MCF 10A (cell line): ENCODE measurements at regions of chr5 and their contacts with region 1.

Region 1: DNA sequence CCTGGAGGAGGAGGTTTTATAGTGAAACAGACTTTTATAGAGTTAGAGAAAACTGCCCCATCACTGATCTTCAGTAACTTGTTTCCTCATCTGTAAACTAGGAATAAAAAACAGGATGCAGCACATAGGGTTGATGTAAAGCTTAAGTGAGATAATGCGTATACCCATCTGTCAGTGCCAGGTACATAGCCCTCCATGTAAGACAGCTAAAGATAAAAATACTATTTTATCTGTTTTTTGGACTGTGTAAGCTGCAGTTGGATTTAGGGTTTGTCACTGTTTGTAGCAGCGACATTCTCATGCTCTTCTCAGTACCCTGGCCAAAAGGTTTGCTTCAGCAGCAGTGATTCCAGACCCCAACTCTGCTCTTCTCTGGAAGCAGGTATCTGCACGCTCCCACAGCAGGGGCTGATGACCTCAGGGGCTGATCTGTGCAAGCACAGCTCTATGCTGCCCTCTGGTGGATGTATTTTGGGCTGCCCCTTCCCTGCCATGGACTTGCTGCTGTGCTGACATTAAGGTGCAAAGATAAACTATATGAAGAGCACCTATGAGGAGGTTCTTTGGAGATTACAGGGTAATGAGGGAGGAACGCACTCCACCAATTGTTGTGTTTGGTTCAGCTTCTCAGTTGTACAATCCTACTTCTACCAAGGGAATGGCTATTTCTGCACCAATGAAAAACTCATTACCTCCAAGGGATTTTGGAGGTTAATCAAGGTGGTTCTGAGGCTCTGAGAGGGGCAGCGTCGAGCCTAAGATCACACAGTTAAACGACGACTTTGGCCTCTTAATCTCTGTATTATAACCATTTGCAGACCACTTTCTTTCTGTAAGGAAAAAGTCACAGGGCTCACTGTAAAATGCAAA is 13.1 kb downstream of the HMHB1 start:
- DNase-seq: peak; percentile 84
- H3K4me3 Mint-ChIP-seq: no peak overlapping the region
- H3K27ac Mint-ChIP-seq: no peak overlapping the region
- H3K4me1 Mint-ChIP-seq: peaks cover 6% of the 10 kb centered on the region
- H3K27me3 Mint-ChIP-seq: no peaks in the 10 kb centered on the region
- CTCF ChIP-seq: peak; percentile 99

Region 2: DNA sequence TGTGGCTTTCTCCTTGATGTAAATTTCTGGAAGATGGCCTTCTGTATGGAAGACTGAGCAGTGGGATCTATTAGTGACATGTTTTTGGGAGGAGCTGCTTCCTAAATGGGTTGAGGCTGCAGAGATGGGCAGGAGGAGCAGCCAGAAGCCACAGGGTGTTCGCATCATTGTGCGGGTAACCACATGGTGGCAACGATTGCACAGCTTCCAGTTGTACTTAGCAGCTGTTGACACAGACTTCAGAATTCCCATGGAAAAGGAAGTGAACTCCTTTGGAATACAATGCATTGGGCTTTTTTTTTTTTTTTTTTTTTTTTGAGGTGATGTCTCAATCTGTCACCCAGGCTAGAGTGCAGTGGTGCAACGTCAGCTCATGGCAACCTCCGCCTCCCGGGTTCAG is 718.9 kb before region 1 on chr5:
- CTCF ChIA-PET with region 1: interaction called, 4 read pairs
- POLR2A ChIA-PET with region 1: no interaction called
- intact Hi-C with region 1: loop called (anchors 1 kb)
- DNase-seq: peak; percentile 79
- H3K4me3 Mint-ChIP-seq: no peak overlapping the region
- H3K27ac Mint-ChIP-seq: no peak overlapping the region
- H3K4me1 Mint-ChIP-seq: peaks cover 5% of the 10 kb centered on the region
- H3K27me3 Mint-ChIP-seq: no peaks in the 10 kb centered on the region
- CTCF ChIP-seq: peak; percentile 33

Region 3: GRCh38 chr5:143506881-143507551 is 318.1 kb before region 1 on chr5:
- CTCF ChIA-PET with region 1: interaction called, 9 read pairs
- POLR2A ChIA-PET with region 1: interaction called, 4 read pairs
- intact Hi-C with region 1: loop called (anchors 5 kb)
- DNase-seq: peak; percentile 98
- H3K4me3 Mint-ChIP-seq: peak overlapping the region; percentile 44
- H3K27ac Mint-ChIP-seq: peak overlapping the region; percentile 84
- H3K4me1 Mint-ChIP-seq: peaks cover 41% of the 10 kb centered on the region
- H3K27me3 Mint-ChIP-seq: no peaks in the 10 kb centered on the region
- CTCF ChIP-seq: peak; percentile 16

Region 4: DNA sequence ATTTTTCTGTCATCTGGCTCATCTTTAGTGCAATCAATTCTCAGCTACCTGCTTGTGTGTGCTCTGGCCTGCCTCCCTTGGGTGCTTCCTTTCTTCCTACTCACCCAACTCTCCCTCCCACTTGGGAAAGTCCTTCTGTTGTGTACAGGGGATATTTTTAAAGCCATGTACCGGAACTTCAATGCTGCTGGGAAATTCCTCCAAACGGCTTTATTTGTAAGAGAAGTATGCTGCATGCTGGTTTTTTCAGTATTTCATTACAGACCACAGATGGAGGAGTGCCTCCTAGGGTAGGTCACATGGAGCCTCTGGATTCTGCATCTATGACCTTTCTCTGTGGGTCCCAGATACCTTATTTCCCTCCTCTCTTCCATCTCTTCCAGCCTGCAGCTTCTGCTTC is 18.5 kb before region 1 on chr5:
- CTCF ChIA-PET with region 1: interaction called, 17 read pairs
- POLR2A ChIA-PET with region 1: no interaction called
- intact Hi-C with region 1: no loop called
- DNase-seq: no peak
- H3K4me3 Mint-ChIP-seq: no peak overlapping the region
- H3K27ac Mint-ChIP-seq: no peak overlapping the region
- H3K4me1 Mint-ChIP-seq: no peaks in the 10 kb centered on the region
- H3K27me3 Mint-ChIP-seq: no peaks in the 10 kb centered on the region
- CTCF ChIP-seq: no peak

Region 5: DNA sequence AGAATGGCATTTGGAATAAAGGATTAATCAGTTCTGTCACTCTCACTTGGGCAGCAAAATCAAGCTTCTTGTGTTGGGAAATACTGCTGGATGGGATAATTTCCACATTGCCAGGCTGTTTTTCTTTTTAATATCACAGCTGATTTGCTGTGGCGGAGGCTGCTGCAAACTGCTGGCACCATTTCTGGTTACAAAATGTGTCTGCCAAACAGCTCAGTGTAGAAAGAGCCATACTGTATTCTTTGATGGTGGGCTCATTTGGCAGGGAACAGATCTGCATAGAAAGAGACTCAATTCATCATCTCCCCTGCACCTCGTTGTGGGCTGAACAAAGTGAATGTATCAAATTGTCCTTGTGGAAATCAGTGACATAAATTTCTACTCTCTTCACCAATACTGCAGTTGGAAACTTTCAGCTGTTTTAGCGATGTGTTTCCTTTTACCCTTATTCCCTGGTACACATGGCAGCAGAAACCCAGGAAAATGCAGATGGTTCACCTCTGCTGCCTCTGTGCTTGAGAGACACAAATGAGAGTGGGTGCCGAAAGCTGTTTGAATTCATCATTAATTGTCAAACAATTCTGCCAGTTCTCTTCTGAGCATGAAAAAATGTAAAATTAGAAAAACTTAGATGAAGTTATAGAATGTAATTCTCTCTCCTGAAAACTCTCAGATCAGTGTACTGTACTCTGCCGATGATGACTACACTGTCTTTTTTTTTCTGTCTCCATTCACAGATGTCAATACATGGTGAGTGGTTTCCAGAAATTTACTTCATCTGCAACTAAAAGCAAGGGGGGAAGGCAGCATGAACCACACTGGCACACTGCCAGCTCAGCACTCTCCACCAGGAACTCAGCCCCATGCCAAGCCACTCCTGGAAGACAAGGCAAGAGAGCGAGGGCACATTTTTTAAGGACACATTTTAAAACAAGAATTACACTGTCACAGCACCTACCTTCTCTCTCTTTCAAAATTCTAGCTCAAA is 61.9 kb after region 1 on chr5:
- CTCF ChIA-PET with region 1: interaction called, 15 read pairs
- POLR2A ChIA-PET with region 1: interaction called, 3 read pairs
- intact Hi-C with region 1: no loop called
- DNase-seq: peak; percentile 68
- H3K4me3 Mint-ChIP-seq: peak overlapping the region; percentile 5
- H3K27ac Mint-ChIP-seq: peak overlapping the region; percentile 62
- H3K4me1 Mint-ChIP-seq: peaks cover 51% of the 10 kb centered on the region
- H3K27me3 Mint-ChIP-seq: no peaks in the 10 kb centered on the region
- CTCF ChIP-seq: no peak

Region 6: DNA sequence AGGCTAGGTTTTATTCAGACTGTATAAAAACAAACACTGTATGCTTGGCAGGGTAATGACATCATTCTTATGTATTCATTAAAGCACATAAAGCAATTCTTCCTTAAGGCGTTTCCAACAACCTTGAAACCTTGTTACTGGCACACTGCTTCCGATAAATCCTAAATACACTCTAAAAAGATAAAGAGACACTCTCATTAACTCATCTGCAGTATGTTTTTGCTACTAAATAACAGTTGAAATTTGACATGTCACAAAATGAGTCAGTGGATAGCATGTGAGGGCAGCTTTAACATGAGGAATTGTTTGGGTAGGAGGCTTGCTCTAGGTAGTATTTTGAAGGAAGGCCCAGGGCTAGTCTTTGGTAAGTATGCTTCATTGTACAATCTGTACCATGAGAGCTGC is 331.7 kb after region 1 on chr5:
- CTCF ChIA-PET with region 1: no interaction called
- POLR2A ChIA-PET with region 1: no interaction called
- intact Hi-C with region 1: no loop called
- DNase-seq: no peak
- H3K4me3 Mint-ChIP-seq: no peak overlapping the region
- H3K27ac Mint-ChIP-seq: peak overlapping the region; percentile 44
- H3K4me1 Mint-ChIP-seq: peaks cover 5% of the 10 kb centered on the region
- H3K27me3 Mint-ChIP-seq: no peaks in the 10 kb centered on the region
- CTCF ChIP-seq: no peak

Region 7: GRCh38 chr5:144183254-144183889 is 358.3 kb after region 1 on chr5:
- CTCF ChIA-PET with region 1: interaction called, 4 read pairs
- POLR2A ChIA-PET with region 1: no interaction called
- intact Hi-C with region 1: loop called (anchors 2 kb)
- DNase-seq: peak; percentile 64
- H3K4me3 Mint-ChIP-seq: no peak overlapping the region
- H3K27ac Mint-ChIP-seq: no peak overlapping the region
- H3K4me1 Mint-ChIP-seq: peaks cover 14% of the 10 kb centered on the region
- H3K27me3 Mint-ChIP-seq: no peaks in the 10 kb centered on the region
- CTCF ChIP-seq: peak; percentile 74